Gastrocnemius medialis (tissue), 4 donors: ENCODE measurements at regions of chr9 and their contacts with region 1.

Region 1: DNA sequence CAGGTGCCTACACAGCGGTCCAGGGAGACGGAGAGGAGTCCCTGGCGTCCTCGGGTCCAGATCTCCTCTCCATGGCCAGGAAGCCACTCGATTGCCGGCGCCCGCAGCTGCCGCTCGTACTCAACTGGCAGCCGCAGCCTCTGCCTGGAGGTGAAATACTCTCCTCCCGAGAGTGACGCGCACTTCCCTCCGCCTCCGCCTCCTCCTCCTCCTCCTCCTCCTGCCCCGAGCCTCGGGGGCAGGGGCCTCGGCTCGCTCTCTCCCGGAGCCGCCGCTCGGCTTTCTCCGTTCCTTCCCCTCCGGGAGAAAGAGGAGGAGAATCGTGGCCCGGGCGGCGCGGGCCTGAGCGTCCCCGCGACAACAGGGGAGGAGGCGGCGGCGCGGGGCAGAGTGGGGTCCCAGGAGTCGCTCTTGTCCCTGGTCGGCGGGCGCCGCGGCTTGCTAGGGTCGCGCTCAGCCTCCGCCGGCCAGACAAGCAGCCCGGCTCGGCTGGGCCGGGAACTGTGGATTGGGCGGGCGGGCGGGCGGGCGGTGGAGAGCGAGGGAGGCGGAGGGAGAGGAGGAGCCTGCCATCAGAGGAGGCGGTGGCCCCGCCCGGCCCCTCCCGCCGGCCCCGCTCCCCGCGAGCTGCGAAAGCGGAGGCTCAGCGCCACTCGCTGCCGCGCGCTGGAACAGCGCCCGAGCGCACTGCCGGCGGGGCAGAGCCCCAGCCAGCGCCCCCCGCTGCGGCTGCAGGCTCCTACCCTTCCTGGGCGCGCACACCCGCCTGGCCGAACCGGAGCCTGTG is at the start of gene CEMIP2:
- DNase-seq: peak; percentile 88 to 89
- ATAC-seq: peak; percentile 82 to 84
- H3K4me3 ChIP-seq: peak within 1 kb of the TSS; percentile 85 to 95 (median 91)
- H3K27ac ChIP-seq: peak within 1 kb of the TSS; percentile 94 to 100 (median 99)
- H3K4me1 ChIP-seq: peaks cover 45% of the 10 kb centered on the region in 2 donors
- H3K27me3 ChIP-seq: no peaks in the 10 kb centered on the region
- CTCF ChIP-seq: no peak
- POLR2A ChIP-seq: peak; percentile 91 to 96
- total RNA-seq, gene CEMIP2: 10.6 to 29.9 (median 14.7) TPM

Region 2: GRCh38 chr9:71604197-71605063 is 164.2 kb before region 1 on chr9:
- in situ Hi-C with region 1: no loop called
- intact Hi-C with region 1: loop called (anchors 2 kb)
- DNase-seq: peak; percentile 4 to 32
- ATAC-seq: no peak
- H3K4me3 ChIP-seq: no peak overlapping the region
- H3K27ac ChIP-seq: no peak overlapping the region
- H3K4me1 ChIP-seq: peaks cover 8% of the 10 kb centered on the region in 2 donors
- H3K27me3 ChIP-seq: no peaks in the 10 kb centered on the region
- CTCF ChIP-seq: peak; percentile 25 to 61 (median 51)
- POLR2A ChIP-seq: no peak

Region 3: GRCh38 chr9:71716138-71716909 is 52.3 kb before region 1 on chr9:
- in situ Hi-C with region 1: no loop called
- intact Hi-C with region 1: loop called (anchors 5 kb)
- DNase-seq: no peak
- ATAC-seq: no peak
- H3K4me3 ChIP-seq: no peak overlapping the region
- H3K27ac ChIP-seq: no peak overlapping the region
- H3K4me1 ChIP-seq: peaks cover 0 to 11% of the 10 kb centered on the region in 2 donors
- H3K27me3 ChIP-seq: no peaks in the 10 kb centered on the region
- CTCF ChIP-seq: peak in 3 of 5 experiments; percentile 5 to 43 (median 18)
- POLR2A ChIP-seq: no peak

Region 4: GRCh38 chr9:71911253-71912074 is 142.9 kb after region 1 on chr9 and contains the start of gene C9orf85:
- in situ Hi-C with region 1: no loop called
- intact Hi-C with region 1: loop called (anchors 1 kb)
- DNase-seq: peak; percentile 99
- ATAC-seq: peak; percentile 91 to 96
- H3K4me3 ChIP-seq: peak within 1 kb of the TSS; percentile 73 to 96 (median 87)
- H3K27ac ChIP-seq: peak within 1 kb of the TSS; percentile 88 to 96 (median 92)
- H3K4me1 ChIP-seq: peaks cover 43 to 58% of the 10 kb centered on the region in 2 donors
- H3K27me3 ChIP-seq: no peaks in the 10 kb centered on the region
- CTCF ChIP-seq: no peak
- POLR2A ChIP-seq: peak in 1 of 2 donors; percentile 69
- total RNA-seq, gene C9orf85: 1.7 to 9.6 (median 6.3) TPM

Region 5: GRCh38 chr9:72586388-72587130 is 818.0 kb after region 1 on chr9:
- in situ Hi-C with region 1: no loop called
- intact Hi-C with region 1: loop called (anchors 10 kb)
- DNase-seq: peak in 1 of 2 donors; percentile 39
- ATAC-seq: peak; percentile 64 to 87
- H3K4me3 ChIP-seq: no peak overlapping the region
- H3K27ac ChIP-seq: peak overlapping the region in 3 of 4 donors; percentile 36 to 69 (median 65)
- H3K4me1 ChIP-seq: peaks cover 5 to 12% of the 10 kb centered on the region in 2 donors
- H3K27me3 ChIP-seq: no peaks in the 10 kb centered on the region
- CTCF ChIP-seq: peak in 1 of 5 experiments; percentile 9
- POLR2A ChIP-seq: no peak